IMR-90 (cell line): ENCODE measurements at regions of chr6 and their contacts with region 1.

Region 1: GRCh38 chr6:116648156-116648555 is 20.4 kb downstream of the ZUP1 start:
- DNase-seq: peak; percentile 51
- ATAC-seq: peak; percentile 89
- H3K4me3 ChIP-seq: no peak overlapping the region
- H3K27ac ChIP-seq: no peak overlapping the region
- H3K4me1 ChIP-seq: peaks cover 2% of the 10 kb centered on the region
- H3K27me3 ChIP-seq: no peaks in the 10 kb centered on the region
- CTCF ChIP-seq: no peak
- POLR2A ChIP-seq: no peak
- RAD21 ChIP-seq: no peak

Region 2: DNA sequence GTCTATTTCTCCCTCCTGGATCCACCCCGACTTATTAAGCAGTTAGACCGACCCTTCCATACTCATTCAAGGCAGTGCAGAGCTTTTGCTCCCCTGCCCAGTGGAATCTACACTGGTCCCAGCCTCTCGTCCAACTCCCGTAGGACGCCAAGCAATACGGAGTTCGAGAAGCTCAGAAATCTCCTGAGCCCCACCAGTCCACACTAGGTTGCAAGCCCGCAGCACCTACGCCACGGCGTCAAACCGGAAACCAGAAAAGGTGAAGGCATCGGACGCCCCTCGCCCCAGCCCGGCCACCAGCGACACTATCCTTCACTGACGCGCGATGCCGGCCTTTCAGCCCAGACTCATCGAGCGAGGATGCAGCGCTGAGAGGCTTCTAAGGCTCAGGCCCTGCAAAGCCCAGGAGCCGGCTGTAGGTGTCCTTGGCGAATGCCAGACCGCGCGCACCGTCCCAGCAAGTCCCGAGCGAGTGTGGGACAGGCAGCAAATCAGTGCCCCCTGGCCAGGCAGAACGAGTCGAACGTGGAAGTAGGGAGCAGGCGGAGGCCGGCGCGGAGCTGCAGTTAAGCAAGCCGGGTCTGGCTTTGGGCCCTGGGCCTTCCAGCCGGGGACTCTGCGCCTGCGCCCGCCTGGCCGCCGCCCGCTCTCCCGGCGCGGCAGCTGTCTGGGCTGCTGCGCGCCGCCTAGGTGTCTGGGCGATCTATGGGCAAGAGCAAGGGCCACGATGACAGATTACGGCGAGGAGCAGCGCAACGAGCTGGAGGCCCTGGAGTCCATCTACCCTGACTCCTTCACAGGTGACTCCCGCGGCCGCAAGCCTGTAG is 77.1 kb before region 1 on chr6 and contains the start of gene RWDD1:
- CTCF ChIA-PET with region 1: no interaction called
- POLR2A ChIA-PET with region 1: no interaction called
- dilution Hi-C with region 1: no loop called
- in situ Hi-C with region 1: no loop called
- intact Hi-C with region 1: loop called (anchors 5 kb)
- DNase-seq: peak; percentile 100
- ATAC-seq: peak; percentile 97
- H3K4me3 ChIP-seq: peak within 1 kb of the TSS; percentile 81
- H3K27ac ChIP-seq: peak within 1 kb of the TSS; percentile 88
- H3K4me1 ChIP-seq: no peaks in the 10 kb centered on the region
- H3K27me3 ChIP-seq: no peaks in the 10 kb centered on the region
- CTCF ChIP-seq: no peak
- POLR2A ChIP-seq: peak; percentile 84
- RAD21 ChIP-seq: no peak
- total RNA-seq, gene RWDD1: 35.8 and 92.8 TPM in 2 replicates

Region 3: GRCh38 chr6:116586276-116586675 is 61.9 kb before region 1 on chr6:
- CTCF ChIA-PET with region 1: no interaction called
- POLR2A ChIA-PET with region 1: no interaction called
- dilution Hi-C with region 1: no loop called
- in situ Hi-C with region 1: no loop called
- intact Hi-C with region 1: loop called (anchors 5 kb)
- DNase-seq: no peak
- ATAC-seq: no peak
- H3K4me3 ChIP-seq: no peak overlapping the region
- H3K27ac ChIP-seq: no peak overlapping the region
- H3K4me1 ChIP-seq: no peaks in the 10 kb centered on the region
- H3K27me3 ChIP-seq: no peaks in the 10 kb centered on the region
- CTCF ChIP-seq: no peak
- POLR2A ChIP-seq: no peak
- RAD21 ChIP-seq: no peak

Region 4: DNA sequence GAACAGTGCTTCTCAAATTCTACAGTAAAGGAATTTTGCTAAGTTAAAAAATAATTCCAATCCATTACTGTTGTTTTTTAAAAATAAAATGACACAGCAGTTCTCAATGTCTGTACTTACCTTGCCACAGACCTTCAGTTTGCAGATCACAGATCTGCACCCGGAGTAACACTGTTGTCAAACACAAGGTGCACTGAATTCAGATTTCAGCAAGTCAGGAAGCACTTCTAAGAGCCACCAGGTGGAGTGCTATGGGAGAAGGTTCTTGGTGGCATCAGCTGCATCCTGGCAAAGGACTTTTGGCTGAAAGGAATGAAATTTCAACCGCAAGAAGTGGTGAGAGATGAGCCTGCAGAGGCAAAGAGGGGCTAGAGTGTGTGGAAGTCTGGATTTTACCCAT is 14.5 kb before region 1 on chr6:
- CTCF ChIA-PET with region 1: interaction called, 3 read pairs
- POLR2A ChIA-PET with region 1: interaction called, 11 read pairs
- dilution Hi-C with region 1: no loop called
- in situ Hi-C with region 1: no loop called
- intact Hi-C with region 1: no loop called
- DNase-seq: no peak
- ATAC-seq: no peak
- H3K4me3 ChIP-seq: no peak overlapping the region
- H3K27ac ChIP-seq: no peak overlapping the region
- H3K4me1 ChIP-seq: no peaks in the 10 kb centered on the region
- H3K27me3 ChIP-seq: no peaks in the 10 kb centered on the region
- CTCF ChIP-seq: no peak
- POLR2A ChIP-seq: no peak
- RAD21 ChIP-seq: no peak

Region 5: GRCh38 chr6:116996842-116997241 is 348.7 kb after region 1 on chr6:
- CTCF ChIA-PET with region 1: no interaction called
- POLR2A ChIA-PET with region 1: no interaction called
- dilution Hi-C with region 1: no loop called
- in situ Hi-C with region 1: no loop called
- intact Hi-C with region 1: no loop called
- DNase-seq: no peak
- ATAC-seq: no peak
- H3K4me3 ChIP-seq: no peak overlapping the region
- H3K27ac ChIP-seq: no peak overlapping the region
- H3K4me1 ChIP-seq: no peaks in the 10 kb centered on the region
- H3K27me3 ChIP-seq: no peaks in the 10 kb centered on the region
- CTCF ChIP-seq: no peak
- POLR2A ChIP-seq: no peak
- RAD21 ChIP-seq: no peak